B cell (primary cell): ENCODE measurements at regions of chr9 and their contacts with region 1.

Region 1: GRCh38 chr9:109903515-109904138 is 123.6 kb downstream of the PALM2AKAP2 start:
- DNase-seq: peak; percentile 82
- ATAC-seq: peak; percentile 63
- H3K4me3 ChIP-seq: no peak overlapping the region
- H3K4me3 Mint-ChIP-seq: no peak overlapping the region
- H3K27ac ChIP-seq: no peak overlapping the region
- H3K27ac Mint-ChIP-seq: no peak overlapping the region
- H3K4me1 ChIP-seq: peaks cover 34 to 35% of the 10 kb centered on the region in 2 donors
- H3K4me1 Mint-ChIP-seq: peaks cover 11% of the 10 kb centered on the region
- H3K27me3 ChIP-seq: no peaks in the 10 kb centered on the region
- H3K27me3 Mint-ChIP-seq: no peaks in the 10 kb centered on the region
- CTCF ChIP-seq: peak; percentile 94

Region 2: GRCh38 chr9:109972026-109972882 is 68.6 kb after region 1 on chr9:
- CTCF ChIA-PET with region 1: interaction called, 83 read pairs
- POLR2A ChIA-PET with region 1: interaction called, 16 read pairs
- intact Hi-C with region 1: loop called (anchors 1 kb)
- DNase-seq: peak; percentile 85
- ATAC-seq: peak; percentile 73
- H3K4me3 ChIP-seq: peak overlapping the region in 1 of 5 experiments; percentile 13
- H3K4me3 Mint-ChIP-seq: peak overlapping the region; percentile 76
- H3K27ac ChIP-seq: peak overlapping the region; percentile 90 to 93
- H3K27ac Mint-ChIP-seq: peak overlapping the region; percentile 98
- H3K4me1 ChIP-seq: peaks cover 99 to 100% of the 10 kb centered on the region in 2 donors
- H3K4me1 Mint-ChIP-seq: peaks cover 95% of the 10 kb centered on the region
- H3K27me3 ChIP-seq: no peaks in the 10 kb centered on the region
- H3K27me3 Mint-ChIP-seq: no peaks in the 10 kb centered on the region
- CTCF ChIP-seq: peak; percentile 68

Region 3: GRCh38 chr9:110069326-110070248 is 166.0 kb after region 1 on chr9:
- CTCF ChIA-PET with region 1: interaction called, 585 read pairs
- POLR2A ChIA-PET with region 1: interaction called, 3 read pairs
- intact Hi-C with region 1: no loop called
- DNase-seq: no peak
- ATAC-seq: no peak
- H3K4me3 ChIP-seq: no peak overlapping the region
- H3K4me3 Mint-ChIP-seq: peak overlapping the region; percentile 26
- H3K27ac ChIP-seq: peak overlapping the region in 1 of 2 donors; percentile 45
- H3K27ac Mint-ChIP-seq: peak overlapping the region; percentile 65
- H3K4me1 ChIP-seq: peaks cover 57 to 72% of the 10 kb centered on the region in 2 donors
- H3K4me1 Mint-ChIP-seq: peaks cover 88% of the 10 kb centered on the region
- H3K27me3 ChIP-seq: no peaks in the 10 kb centered on the region
- H3K27me3 Mint-ChIP-seq: no peaks in the 10 kb centered on the region
- CTCF ChIP-seq: no peak

Region 4: DNA sequence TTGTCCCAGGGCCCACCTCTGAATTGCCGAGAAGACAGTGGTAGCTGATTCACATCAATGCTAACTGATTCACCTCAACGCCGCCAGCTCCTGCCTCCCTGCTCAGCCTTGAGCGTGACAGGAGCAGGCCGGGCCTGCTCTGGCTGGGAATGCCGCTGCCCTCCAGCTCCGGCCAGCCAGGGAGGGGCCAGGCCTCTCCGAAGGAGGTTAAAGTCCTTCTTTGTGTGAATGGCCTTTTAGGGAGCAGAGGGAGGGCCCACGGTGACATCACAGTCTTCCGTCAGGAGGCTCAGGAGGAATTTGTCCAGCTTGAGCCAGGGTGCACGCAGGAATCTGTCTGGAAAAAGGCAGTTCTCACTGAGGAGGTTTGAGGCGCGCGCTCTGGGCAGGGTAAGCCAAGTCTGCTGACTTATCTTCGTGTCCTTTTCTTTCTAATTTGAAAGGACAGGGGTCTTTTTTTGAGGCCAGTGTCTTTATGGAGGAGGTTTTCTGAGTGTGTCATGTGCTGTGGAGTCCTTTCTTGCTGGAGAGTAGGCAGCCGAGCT is 221.7 kb after region 1 on chr9:
- CTCF ChIA-PET with region 1: interaction called, 26 read pairs
- POLR2A ChIA-PET with region 1: no interaction called
- intact Hi-C with region 1: no loop called
- DNase-seq: no peak
- ATAC-seq: no peak
- H3K4me3 ChIP-seq: no peak overlapping the region
- H3K4me3 Mint-ChIP-seq: peak overlapping the region; percentile 71
- H3K27ac ChIP-seq: peak overlapping the region; percentile 90 to 94
- H3K27ac Mint-ChIP-seq: peak overlapping the region; percentile 89
- H3K4me1 ChIP-seq: peaks cover 84 to 92% of the 10 kb centered on the region in 2 donors
- H3K4me1 Mint-ChIP-seq: peaks cover 97% of the 10 kb centered on the region
- H3K27me3 ChIP-seq: no peaks in the 10 kb centered on the region
- H3K27me3 Mint-ChIP-seq: no peaks in the 10 kb centered on the region
- CTCF ChIP-seq: no peak

Region 5: GRCh38 chr9:110183208-110184145 is 279.9 kb after region 1 on chr9:
- CTCF ChIA-PET with region 1: interaction called, 17 read pairs
- POLR2A ChIA-PET with region 1: no interaction called
- intact Hi-C with region 1: no loop called
- DNase-seq: peak; percentile 65
- ATAC-seq: peak; percentile 53
- H3K4me3 ChIP-seq: no peak overlapping the region
- H3K4me3 Mint-ChIP-seq: no peak overlapping the region
- H3K27ac ChIP-seq: no peak overlapping the region
- H3K27ac Mint-ChIP-seq: no peak overlapping the region
- H3K4me1 ChIP-seq: peaks cover 0 to 2% of the 10 kb centered on the region in 2 donors
- H3K4me1 Mint-ChIP-seq: peaks cover 4% of the 10 kb centered on the region
- H3K27me3 ChIP-seq: no peaks in the 10 kb centered on the region
- H3K27me3 Mint-ChIP-seq: peaks cover 6% of the 10 kb centered on the region
- CTCF ChIP-seq: peak; percentile 80